Endothelial cell of umbilical vein (primary cell): ENCODE measurements at regions of chr7 and their contacts with region 1.

Region 1: DNA sequence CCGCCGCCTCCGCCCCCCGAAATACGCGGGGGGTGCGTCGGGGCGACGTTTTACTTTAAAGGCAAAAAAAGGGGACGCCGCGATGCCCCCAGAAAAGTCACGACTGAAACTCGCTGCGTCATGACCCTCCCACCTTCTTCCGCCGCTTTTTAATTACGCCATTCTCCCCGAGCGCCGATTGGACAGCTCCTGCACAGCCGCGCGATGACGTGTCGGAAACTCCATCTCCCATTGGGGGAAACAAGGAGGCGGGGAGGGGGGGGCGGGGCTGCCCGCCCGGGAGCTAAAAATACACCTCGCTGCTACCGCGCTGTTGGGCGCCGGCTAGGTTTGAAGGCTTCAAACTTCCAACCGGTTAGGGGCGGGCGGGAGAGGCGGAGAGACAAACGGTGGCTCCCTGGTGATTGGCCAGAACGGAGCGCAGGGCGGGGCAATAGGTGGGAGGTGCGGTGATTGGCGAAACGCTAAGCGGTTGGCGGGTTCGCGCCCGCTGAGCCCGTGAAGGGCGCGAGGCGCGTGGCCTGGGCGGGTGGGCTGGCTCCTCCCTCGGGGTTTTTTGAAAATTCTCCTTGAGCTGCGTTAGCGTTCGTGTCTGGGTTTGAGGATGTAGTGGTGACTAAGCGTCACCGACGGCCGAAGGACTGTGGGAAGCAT is at the start of gene RHEB:
- DNase-seq: peak; percentile 99
- H3K4me3 ChIP-seq: peak within 1 kb of the TSS; percentile 75 to 96 (median 94)
- H3K27ac ChIP-seq: peak within 1 kb of the TSS; percentile 86
- H3K4me1 ChIP-seq: peaks cover 15% of the 10 kb centered on the region
- H3K27me3 ChIP-seq: peaks cover 0 to 2% of the 10 kb centered on the region in 2 experiments
- CTCF ChIP-seq: no peak
- POLR2A ChIP-seq: no peak
- total RNA-seq, gene RHEB: 108 and 109 TPM in 2 replicates

Region 2: GRCh38 chr7:151368136-151368571 is 151.7 kb before region 1 on chr7:
- CTCF ChIA-PET with region 1: interaction called, 3 read pairs
- POLR2A ChIA-PET with region 1: interaction called, 3 read pairs
- dilution Hi-C with region 1: no loop called
- intact Hi-C with region 1: loop called (anchors 1 kb)
- DNase-seq: peak; percentile 71
- H3K4me3 ChIP-seq: no peak overlapping the region
- H3K27ac ChIP-seq: no peak overlapping the region
- H3K4me1 ChIP-seq: no peaks in the 10 kb centered on the region
- H3K27me3 ChIP-seq: no peaks in the 10 kb centered on the region
- CTCF ChIP-seq: peak; percentile 97 to 99
- POLR2A ChIP-seq: no peak

Region 3: DNA sequence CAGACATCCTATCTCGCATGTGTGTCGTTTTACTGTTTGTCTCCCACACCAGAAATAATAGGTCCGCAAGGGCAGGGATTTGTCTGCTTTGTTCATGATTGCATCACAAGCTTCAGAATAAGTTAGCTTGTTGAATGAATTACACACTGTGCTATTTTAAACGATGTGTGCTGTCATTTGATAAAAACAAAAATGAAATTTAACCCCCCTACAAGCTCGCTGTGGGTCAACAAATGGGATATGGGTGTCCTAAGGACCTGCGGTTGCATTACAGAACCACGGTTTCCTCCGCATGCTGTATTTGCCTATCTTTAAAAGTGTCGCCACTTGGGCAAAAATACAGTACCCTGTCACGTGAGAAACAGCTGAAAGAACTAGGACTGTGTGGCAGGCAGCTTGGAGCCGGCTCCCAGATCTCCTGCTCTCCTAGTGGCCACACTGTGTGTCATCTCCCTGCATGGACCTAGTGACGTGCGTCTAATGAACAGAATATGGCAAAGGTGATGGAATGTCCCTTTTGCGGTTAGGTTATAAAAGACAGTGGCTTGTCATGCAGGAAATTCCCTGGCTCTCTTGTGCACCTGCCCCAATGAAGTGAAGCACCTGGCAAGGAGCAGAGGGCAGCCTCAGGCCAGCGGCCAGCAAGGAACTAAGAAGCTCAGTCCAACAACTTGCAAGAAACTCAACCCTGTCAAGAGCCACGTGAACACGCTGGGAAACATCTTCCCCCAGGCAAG is 47.1 kb before region 1 on chr7:
- CTCF ChIA-PET with region 1: no interaction called
- POLR2A ChIA-PET with region 1: no interaction called
- dilution Hi-C with region 1: no loop called
- intact Hi-C with region 1: loop called (anchors 1 kb)
- DNase-seq: peak; percentile 86
- H3K4me3 ChIP-seq: no peak overlapping the region
- H3K27ac ChIP-seq: peak overlapping the region; percentile 69
- H3K4me1 ChIP-seq: peaks cover 17% of the 10 kb centered on the region
- H3K27me3 ChIP-seq: no peaks in the 10 kb centered on the region
- CTCF ChIP-seq: no peak
- POLR2A ChIP-seq: no peak

Region 4: GRCh38 chr7:151592868-151593486 is 73.1 kb after region 1 on chr7:
- CTCF ChIA-PET with region 1: no interaction called
- POLR2A ChIA-PET with region 1: no interaction called
- dilution Hi-C with region 1: no loop called
- intact Hi-C with region 1: loop called (anchors 2 kb)
- DNase-seq: peak; percentile 76
- H3K4me3 ChIP-seq: no peak overlapping the region
- H3K27ac ChIP-seq: peak overlapping the region; percentile 36
- H3K4me1 ChIP-seq: peaks cover 39% of the 10 kb centered on the region
- H3K27me3 ChIP-seq: no peaks in the 10 kb centered on the region
- CTCF ChIP-seq: no peak
- POLR2A ChIP-seq: no peak

Region 5: GRCh38 chr7:151727579-151728285 is 207.8 kb after region 1 on chr7:
- CTCF ChIA-PET with region 1: no interaction called
- POLR2A ChIA-PET with region 1: no interaction called
- dilution Hi-C with region 1: no loop called
- intact Hi-C with region 1: loop called (anchors 1 kb)
- DNase-seq: peak; percentile 87
- H3K4me3 ChIP-seq: no peak overlapping the region
- H3K27ac ChIP-seq: peak overlapping the region; percentile 65
- H3K4me1 ChIP-seq: peaks cover 11% of the 10 kb centered on the region
- H3K27me3 ChIP-seq: no peaks in the 10 kb centered on the region
- CTCF ChIP-seq: no peak
- POLR2A ChIP-seq: no peak